Heart right ventricle (tissue), 16 donors: ENCODE measurements at regions of chr9 and their contacts with region 1.

Region 1: DNA sequence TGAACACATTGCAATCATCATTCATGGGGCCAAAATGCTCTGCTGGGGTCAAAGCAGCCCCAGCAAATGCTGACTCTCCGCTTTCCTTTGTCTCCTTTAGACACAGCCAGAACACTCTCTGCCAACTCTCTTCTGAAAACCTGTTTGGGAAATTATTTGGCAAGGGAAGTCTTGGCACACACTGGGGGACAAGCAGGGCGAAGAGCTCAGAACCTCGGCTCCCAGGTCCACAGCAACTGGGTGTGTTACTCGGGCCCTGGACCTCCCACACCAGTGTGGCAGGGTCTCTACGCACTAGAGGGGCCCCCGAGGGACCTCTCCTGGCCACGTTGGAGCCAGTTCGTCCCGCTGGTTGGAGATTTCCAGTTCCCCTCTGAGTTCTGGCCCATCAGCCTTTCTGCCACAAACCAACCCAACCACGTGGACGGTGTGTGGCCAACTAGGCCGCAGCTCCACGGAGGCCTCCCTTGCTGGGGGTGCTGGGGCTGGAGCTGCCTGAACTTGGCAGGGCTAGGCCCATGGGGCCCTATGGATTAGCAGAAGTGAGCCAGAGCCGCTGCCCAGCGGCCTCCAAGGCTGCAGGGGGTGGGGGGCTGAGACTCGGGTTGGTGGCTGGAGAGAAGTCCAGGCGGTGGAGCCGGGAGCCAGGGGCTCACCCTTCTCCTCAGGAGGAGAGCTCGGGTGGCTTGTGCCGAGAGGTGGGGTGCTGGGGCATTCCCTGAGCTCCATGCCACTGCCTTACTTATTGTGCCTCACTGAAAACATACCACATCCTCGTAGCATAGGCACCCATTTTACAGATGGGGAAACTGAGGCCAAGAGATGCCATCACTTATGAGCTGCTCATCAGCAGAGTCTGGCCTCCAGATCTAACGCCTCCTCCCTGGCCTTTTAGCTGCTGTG is 46.8 kb upstream of the RNU6ATAC start:
- DNase-seq: peak; percentile 43 to 47
- ATAC-seq: peak; percentile 22 to 66 (median 38)
- H3K4me3 ChIP-seq: no peak overlapping the region
- H3K27ac ChIP-seq: peak overlapping the region; percentile 66 to 90 (median 71)
- H3K4me1 ChIP-seq: peaks cover 17 to 68% (median 38%) of the 10 kb centered on the region in 9 donors
- H3K27me3 ChIP-seq: no peaks in the 10 kb centered on the region
- CTCF ChIP-seq: no peak

Region 2: GRCh38 chr9:134128727-134129679 is 82.2 kb before region 1 on chr9:
- intact Hi-C with region 1: no loop called
- DNase-seq: peak in 1 of 2 donors; percentile 19
- ATAC-seq: peak in 5 of 8 donors; percentile 6 to 69 (median 28)
- H3K4me3 ChIP-seq: no peak overlapping the region
- H3K27ac ChIP-seq: peak overlapping the region in 3 of 10 donors; percentile 34 to 66 (median 64)
- H3K4me1 ChIP-seq: peaks cover 0 to 23% (median 12%) of the 10 kb centered on the region in 9 donors
- H3K27me3 ChIP-seq: no peaks in the 10 kb centered on the region
- CTCF ChIP-seq: no peak

Region 3: DNA sequence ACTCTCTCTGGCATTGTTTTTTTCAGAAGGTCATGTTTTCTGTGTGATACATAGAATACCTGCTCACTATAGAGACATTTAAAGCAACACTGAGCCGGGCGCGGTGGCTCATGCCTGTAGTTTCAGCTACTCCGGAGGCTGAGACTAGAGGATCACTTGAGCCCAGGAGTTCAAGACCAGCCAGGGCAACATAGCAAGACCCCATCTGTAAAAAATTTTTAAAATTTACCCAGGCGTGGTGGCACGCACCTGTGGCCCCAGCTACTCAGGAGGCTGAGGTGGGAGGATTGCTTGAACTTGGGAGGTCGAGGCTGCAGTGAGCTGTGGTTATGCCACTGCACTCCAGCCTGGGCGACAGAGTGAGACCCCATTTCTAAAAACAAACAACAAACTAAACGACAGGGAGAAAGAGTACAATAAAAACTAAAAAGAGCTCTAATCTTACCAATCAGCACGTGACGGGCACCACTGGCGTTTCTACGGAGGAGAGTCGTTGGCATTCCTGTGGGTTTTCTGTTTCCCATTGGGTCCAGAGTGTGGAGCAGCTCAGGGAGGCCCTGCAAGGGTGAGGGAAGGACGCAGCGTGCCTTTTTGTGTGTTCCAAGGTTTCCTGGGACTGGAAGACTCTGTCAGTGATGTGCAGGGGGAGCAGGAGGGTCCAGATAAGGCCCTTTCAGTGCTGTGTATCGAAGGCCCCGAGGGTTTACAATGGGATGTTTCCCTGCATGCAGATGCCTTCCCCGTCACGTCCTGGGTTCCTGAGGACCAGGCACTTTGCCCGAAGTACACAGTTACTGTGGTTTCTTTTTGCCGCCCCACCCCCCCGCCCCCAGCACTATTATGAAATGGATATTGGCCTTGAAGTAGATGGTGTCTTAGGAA is 39.6 kb before region 1 on chr9:
- intact Hi-C with region 1: loop called in 6 of 10 experiments (anchors 5 kb)
- DNase-seq: no peak
- ATAC-seq: peak in 4 of 8 donors; percentile 2 to 28 (median 10)
- H3K4me3 ChIP-seq: no peak overlapping the region
- H3K27ac ChIP-seq: peak overlapping the region in 6 of 10 donors; percentile 31 to 62 (median 48)
- H3K4me1 ChIP-seq: peaks cover 0 to 42% (median 18%) of the 10 kb centered on the region in 9 donors
- H3K27me3 ChIP-seq: peaks cover 0 to 23% (median 20%) of the 10 kb centered on the region in 7 donors
- CTCF ChIP-seq: no peak